ENCODE measurements at regions of chr6 and their contacts with region 1.

Region 1: GRCh38 chr6:155174576-155175211 is 89.1 kb upstream of the CLDN20 start:
- DNase-seq: peak in 1 of 2 donors; percentile 83
- ATAC-seq: peak; percentile 65 to 78 (median 75)
- H3K4me3 ChIP-seq: no peak overlapping the region
- H3K4me3 Mint-ChIP-seq: no peak overlapping the region
- H3K27ac ChIP-seq: no peak overlapping the region
- H3K27ac Mint-ChIP-seq: no peak overlapping the region
- H3K4me1 ChIP-seq: no peaks in the 10 kb centered on the region
- H3K4me1 Mint-ChIP-seq: no peaks in the 10 kb centered on the region
- H3K27me3 ChIP-seq: no peaks in the 10 kb centered on the region
- H3K27me3 Mint-ChIP-seq: no peaks in the 10 kb centered on the region
- CTCF ChIP-seq: peak; percentile 36

Region 2: DNA sequence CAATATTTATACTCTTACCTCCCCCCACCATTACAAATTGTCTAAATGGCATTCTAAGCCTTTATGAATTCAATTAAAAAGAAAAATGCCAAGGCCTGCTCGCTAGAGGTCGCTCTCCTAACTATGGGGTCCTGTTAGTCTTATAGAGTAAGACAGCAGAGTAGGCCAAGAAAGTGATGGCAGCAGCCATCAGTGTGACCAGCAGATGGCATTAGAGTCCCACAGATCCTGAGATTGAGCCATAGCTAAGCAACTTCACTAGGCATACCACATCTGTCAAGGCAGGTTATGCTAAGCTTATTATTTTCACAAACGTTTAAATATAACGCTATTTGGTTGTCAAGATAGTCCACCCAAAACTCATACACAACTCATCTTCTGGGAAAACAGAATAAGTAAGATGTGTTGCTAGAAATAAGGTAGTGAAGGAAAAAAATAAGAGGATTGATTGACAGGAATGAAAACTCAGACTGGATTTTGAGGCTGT is 499.0 kb before region 1 on chr6:
- intact Hi-C with region 1: loop called (anchors 2 kb)
- DNase-seq: peak; percentile 75 to 96
- ATAC-seq: peak; percentile 100
- H3K4me3 ChIP-seq: no peak overlapping the region
- H3K4me3 Mint-ChIP-seq: no peak overlapping the region
- H3K27ac ChIP-seq: no peak overlapping the region
- H3K27ac Mint-ChIP-seq: no peak overlapping the region
- H3K4me1 ChIP-seq: no peaks in the 10 kb centered on the region
- H3K4me1 Mint-ChIP-seq: no peaks in the 10 kb centered on the region
- H3K27me3 ChIP-seq: no peaks in the 10 kb centered on the region
- H3K27me3 Mint-ChIP-seq: no peaks in the 10 kb centered on the region
- CTCF ChIP-seq: peak; percentile 99

Region 3: DNA sequence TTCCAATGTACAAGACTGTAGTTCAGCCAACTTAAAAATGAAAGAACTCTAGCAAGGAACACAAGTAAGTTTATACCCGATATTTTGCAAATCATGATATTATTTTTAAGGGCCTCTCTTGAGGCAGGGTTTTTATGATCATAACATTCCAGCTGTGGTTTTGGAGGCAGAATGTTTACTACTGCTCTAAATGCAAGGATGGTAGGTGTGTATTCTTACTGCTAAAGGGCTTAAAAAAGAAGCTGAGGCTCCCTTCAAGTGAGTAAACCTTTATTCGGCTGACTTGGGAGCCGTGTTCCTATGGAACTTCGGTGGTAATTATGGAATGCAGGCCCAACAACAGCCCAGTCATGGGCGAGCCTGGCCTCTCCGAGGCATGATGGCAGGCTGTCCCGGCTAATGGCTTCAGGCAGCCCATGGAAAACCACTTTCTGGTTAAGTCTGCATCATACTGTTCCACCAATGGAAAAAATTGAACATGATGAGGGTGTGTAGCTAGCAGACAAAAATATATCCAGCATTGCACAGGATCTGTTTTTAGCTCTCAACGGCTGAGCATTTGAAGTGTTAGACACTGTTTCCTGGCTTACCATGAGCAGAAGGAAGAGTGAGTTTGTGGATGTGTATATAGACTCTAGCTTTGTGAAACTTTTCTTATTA is 68.1 kb before region 1 on chr6:
- intact Hi-C with region 1: no loop called
- DNase-seq: peak in 1 of 2 donors; percentile 6
- ATAC-seq: no peak
- H3K4me3 ChIP-seq: no peak overlapping the region
- H3K4me3 Mint-ChIP-seq: no peak overlapping the region
- H3K27ac ChIP-seq: no peak overlapping the region
- H3K27ac Mint-ChIP-seq: no peak overlapping the region
- H3K4me1 ChIP-seq: no peaks in the 10 kb centered on the region
- H3K4me1 Mint-ChIP-seq: no peaks in the 10 kb centered on the region
- H3K27me3 ChIP-seq: no peaks in the 10 kb centered on the region
- H3K27me3 Mint-ChIP-seq: peaks cover 18 to 37% of the 10 kb centered on the region in 2 donors
- CTCF ChIP-seq: no peak

Region 4: DNA sequence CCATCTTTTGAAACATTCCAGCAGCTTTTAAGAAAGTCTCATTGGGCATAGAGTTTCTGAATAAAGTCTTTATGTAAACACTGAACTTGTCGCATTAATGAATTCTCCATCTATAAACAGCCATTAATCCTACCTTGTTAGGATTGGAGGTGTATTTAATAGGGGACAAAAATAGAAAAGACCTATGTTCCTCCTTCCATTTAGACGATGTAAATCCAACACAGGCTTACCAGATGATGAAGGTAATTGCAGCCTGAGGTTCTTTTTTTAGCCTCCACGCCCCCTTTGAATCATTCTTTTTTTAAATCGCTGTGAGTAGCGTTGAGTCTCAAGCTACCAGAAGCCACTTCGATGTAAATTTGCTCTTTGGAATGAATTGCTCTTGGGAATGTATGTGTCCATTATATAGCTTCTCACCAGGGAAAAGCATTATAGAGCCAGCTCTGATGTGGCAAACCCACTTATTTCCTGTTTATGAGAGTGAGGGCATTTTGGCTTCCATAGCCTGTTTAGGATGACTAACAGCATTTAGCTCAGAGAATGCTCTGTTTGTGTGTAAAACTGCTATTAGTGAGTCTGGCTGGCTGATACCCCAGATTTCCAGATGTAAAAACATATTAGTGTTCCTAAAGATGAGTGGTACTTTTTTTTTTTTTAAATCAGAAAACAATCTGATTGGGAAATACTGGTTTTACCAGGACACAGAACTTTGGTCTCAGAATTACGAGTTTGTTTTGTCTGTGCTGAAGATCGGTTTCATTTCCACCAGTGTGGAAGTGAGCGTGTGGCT is 14.2 kb after region 1 on chr6:
- intact Hi-C with region 1: no loop called
- DNase-seq: peak in 1 of 2 donors; percentile 27
- ATAC-seq: no peak
- H3K4me3 ChIP-seq: no peak overlapping the region
- H3K4me3 Mint-ChIP-seq: no peak overlapping the region
- H3K27ac ChIP-seq: no peak overlapping the region
- H3K27ac Mint-ChIP-seq: no peak overlapping the region
- H3K4me1 ChIP-seq: no peaks in the 10 kb centered on the region
- H3K4me1 Mint-ChIP-seq: peaks cover 0 to 14% of the 10 kb centered on the region in 2 donors
- H3K27me3 ChIP-seq: no peaks in the 10 kb centered on the region
- H3K27me3 Mint-ChIP-seq: peaks cover 0 to 3% of the 10 kb centered on the region in 2 donors
- CTCF ChIP-seq: no peak